ENCODE measurements at regions of chr11 and their contacts with region 1.

Region 1: GRCh38 chr11:126440792-126441514 is 85.5 kb downstream of the ST3GAL4 start:
- DNase-seq: peak; percentile 94
- ATAC-seq: peak; percentile 88
- H3K4me3 ChIP-seq: peak overlapping the region; percentile 34; the same call in 1 of the 2 replicates
- H3K27ac ChIP-seq: no peak overlapping the region
- H3K4me1 ChIP-seq: peaks cover 5% of the 10 kb centered on the region; the same call in 1 of the 2 replicates
- H3K27me3 ChIP-seq: no peaks in the 10 kb centered on the region
- CTCF ChIP-seq: peak; percentile 98

Region 2: GRCh38 chr11:126480410-126481302 is 39.7 kb after region 1 on chr11:
- CTCF ChIA-PET with region 1: interaction called, 14 read pairs
- POLR2A ChIA-PET with region 1: no interaction called
- intact Hi-C with region 1: loop called (anchors 1 kb)
- DNase-seq: peak; percentile 93
- ATAC-seq: peak; percentile 74
- H3K4me3 ChIP-seq: peak overlapping the region; percentile 30; the same call in 1 of the 2 replicates
- H3K27ac ChIP-seq: no peak overlapping the region
- H3K4me1 ChIP-seq: peaks cover 15% of the 10 kb centered on the region
- H3K27me3 ChIP-seq: no peaks in the 10 kb centered on the region
- CTCF ChIP-seq: peak; percentile 98

Measured in PC-3 (cell line).